GM10248 (cell line): ENCODE measurements at regions of chr15 and their contacts with region 1.

Region 1: GRCh38 chr15:65841121-65841925 is 28.0 kb upstream of the RAB11A start:
- DNase-seq: no peak
- CTCF ChIP-seq: no peak

Region 2: GRCh38 chr15:65856821-65857455 is 15.6 kb after region 1 on chr15:
- CTCF ChIA-PET with region 1: interaction called, 20 read pairs
- POLR2A ChIA-PET with region 1: no interaction called
- DNase-seq: peak; percentile 52
- CTCF ChIP-seq: peak; percentile 74